A673 (cell line): ENCODE measurements at regions of chr5 and their contacts with region 1.

Region 1: DNA sequence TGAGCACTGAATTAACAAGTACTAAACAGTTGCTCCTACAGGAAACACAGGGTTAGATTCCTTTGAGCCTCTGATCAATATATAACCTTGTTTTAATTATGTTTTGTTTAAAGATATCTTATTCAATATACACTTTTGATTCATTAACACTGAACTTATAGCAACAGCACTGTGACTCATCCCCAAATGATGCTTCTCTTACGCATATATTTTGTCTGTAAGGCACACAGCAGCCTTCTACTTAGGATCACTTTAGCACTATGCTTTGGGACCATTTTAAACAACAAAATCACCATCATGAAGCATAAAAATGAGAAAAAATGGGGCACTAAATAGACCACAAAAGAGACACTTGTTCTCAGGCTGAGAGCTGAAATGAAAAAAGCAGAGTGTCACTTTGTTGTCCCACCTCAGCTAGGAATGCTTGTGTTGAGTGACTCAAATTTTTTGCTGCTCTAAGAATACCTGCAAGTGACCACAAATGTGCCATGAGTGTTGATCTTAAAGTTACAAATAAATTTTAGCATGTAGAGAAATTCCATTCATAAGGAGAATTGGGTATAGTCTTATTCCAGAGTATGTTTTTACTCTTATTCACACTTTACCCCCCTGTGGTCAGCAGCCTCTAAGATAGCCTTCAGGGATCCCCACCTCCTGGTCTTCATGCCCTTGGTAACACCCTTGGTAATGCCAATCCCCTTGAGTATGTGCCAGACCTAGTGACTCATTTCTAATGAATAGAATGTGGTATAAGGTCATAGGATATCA is 252.7 kb upstream of the IL12B start:
- DNase-seq: no peak
- H3K4me3 ChIP-seq: no peak overlapping the region
- H3K27ac ChIP-seq: no peak overlapping the region
- H3K4me1 ChIP-seq: no peaks in the 10 kb centered on the region
- H3K27me3 ChIP-seq: peaks cover 4% of the 10 kb centered on the region
- CTCF ChIP-seq: no peak

Region 2: GRCh38 chr5:159456722-159457465 is 126.0 kb before region 1 on chr5:
- CTCF ChIA-PET with region 1: no interaction called
- POLR2A ChIA-PET with region 1: no interaction called
- intact Hi-C with region 1: no loop called
- DNase-seq: no peak
- H3K4me3 ChIP-seq: no peak overlapping the region
- H3K27ac ChIP-seq: no peak overlapping the region
- H3K4me1 ChIP-seq: no peaks in the 10 kb centered on the region
- H3K27me3 ChIP-seq: no peaks in the 10 kb centered on the region
- CTCF ChIP-seq: no peak

Region 3: GRCh38 chr5:159820692-159821091 is 237.8 kb after region 1 on chr5:
- CTCF ChIA-PET with region 1: no interaction called
- POLR2A ChIA-PET with region 1: interaction called, 10 read pairs
- intact Hi-C with region 1: no loop called
- DNase-seq: no peak
- H3K4me3 ChIP-seq: no peak overlapping the region
- H3K27ac ChIP-seq: no peak overlapping the region
- H3K4me1 ChIP-seq: no peaks in the 10 kb centered on the region
- H3K27me3 ChIP-seq: peaks cover 7% of the 10 kb centered on the region
- CTCF ChIP-seq: no peak